Psoas muscle (tissue), 8 donors: ENCODE measurements at regions of chr5 and their contacts with region 1.

Region 1: DNA sequence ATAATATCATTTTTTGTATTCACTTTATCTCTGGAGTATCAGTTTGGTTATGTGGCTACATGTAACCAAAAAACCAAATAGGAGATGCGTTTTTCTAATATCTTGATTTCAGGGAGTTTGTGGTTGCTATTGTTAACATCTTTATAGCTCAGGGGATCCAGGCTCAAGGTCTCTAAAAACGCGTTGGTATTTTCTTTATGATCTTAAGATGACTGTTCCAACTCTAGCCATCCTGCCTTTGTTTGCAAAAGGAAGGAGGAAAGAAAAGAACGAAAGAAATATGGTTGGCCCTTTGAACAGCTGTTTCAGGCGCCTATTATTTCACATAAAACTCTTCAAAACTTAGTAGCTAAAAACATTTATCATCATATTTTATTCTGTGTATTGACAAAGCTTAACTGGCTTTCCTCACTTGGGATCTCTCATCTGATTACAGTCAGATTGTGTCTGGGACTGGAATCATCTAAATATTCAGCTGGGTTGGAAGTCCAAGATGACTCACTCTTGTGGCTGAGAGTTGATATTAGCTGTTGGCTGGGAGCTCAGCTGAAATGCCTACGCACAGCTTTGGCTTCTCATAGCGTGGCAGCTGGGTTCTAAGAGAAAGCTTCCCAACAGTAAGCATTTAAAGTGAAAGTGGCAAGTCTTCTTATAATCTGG is 60.1 kb downstream of the FAM174A start:
- DNase-seq: peak; percentile 30 to 69
- ATAC-seq: peak; percentile 95 to 99 (median 98)
- H3K4me3 ChIP-seq: peak overlapping the region; percentile 57
- H3K27ac ChIP-seq: peak overlapping the region; percentile 86
- H3K4me1 ChIP-seq: peaks cover 25% of the 10 kb centered on the region
- H3K27me3 ChIP-seq: no peaks in the 10 kb centered on the region
- CTCF ChIP-seq: no peak

Region 2: GRCh38 chr5:100535060-100536005 is 59.9 kb before region 1 on chr5 and contains the start of gene FAM174A:
- intact Hi-C with region 1: loop called in 1 of 2 experiments (anchors 5 kb)
- DNase-seq: peak; percentile 96 to 98
- ATAC-seq: peak; percentile 99
- H3K4me3 ChIP-seq: peak within 1 kb of the TSS; percentile 92
- H3K27ac ChIP-seq: peak within 1 kb of the TSS; percentile 98
- H3K4me1 ChIP-seq: peaks cover 24% of the 10 kb centered on the region
- H3K27me3 ChIP-seq: no peaks in the 10 kb centered on the region
- CTCF ChIP-seq: no peak
- total RNA-seq, gene FAM174A: 30.6 to 39.1 (median 35.0) TPM

Region 3: DNA sequence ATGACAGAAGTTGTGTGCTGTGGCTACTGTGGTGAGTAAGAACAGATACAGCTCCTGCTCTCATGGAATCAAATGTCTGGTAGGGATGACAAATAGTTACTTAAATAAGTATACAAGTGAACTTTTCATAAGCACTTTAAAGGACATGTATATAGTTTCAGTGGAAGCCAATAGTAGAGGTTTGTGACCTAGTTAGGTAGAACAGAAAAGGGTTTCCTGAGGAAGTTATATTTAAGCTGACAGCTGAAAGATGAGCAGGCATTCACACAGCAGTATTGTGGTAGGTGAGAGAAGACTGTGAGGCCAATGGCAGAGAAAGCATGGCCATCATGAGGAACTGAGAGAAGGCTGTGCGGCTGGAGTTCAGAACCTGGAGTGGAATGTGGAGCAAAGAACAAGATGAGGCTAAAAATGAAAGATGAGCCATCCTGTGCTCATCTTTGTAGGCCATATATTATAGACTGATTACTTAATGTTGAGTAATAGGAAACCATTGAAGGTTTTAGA is 44.7 kb before region 1 on chr5:
- intact Hi-C with region 1: loop called in 1 of 2 experiments (anchors 5 kb)
- DNase-seq: peak; percentile 18 to 50
- ATAC-seq: peak; percentile 91 to 96 (median 95)
- H3K4me3 ChIP-seq: peak overlapping the region; percentile 15
- H3K27ac ChIP-seq: peak overlapping the region; percentile 87
- H3K4me1 ChIP-seq: peaks cover 47% of the 10 kb centered on the region
- H3K27me3 ChIP-seq: no peaks in the 10 kb centered on the region
- CTCF ChIP-seq: no peak